ENCODE measurements at regions of chr10 and their contacts with region 1.

Region 1: GRCh38 chr10:22067099-22067498 is 63.6 kb upstream of the DNAJC1 start:
- DNase-seq: no peak
- H3K4me3 ChIP-seq: no peak overlapping the region
- H3K27ac ChIP-seq: no peak overlapping the region
- H3K4me1 ChIP-seq: no peaks in the 10 kb centered on the region
- H3K27me3 ChIP-seq: no peaks in the 10 kb centered on the region
- CTCF ChIP-seq: no peak
- POLR2A ChIP-seq: no peak

Region 2: GRCh38 chr10:21217107-21217506 is 850.0 kb before region 1 on chr10:
- intact Hi-C with region 1: loop called (anchors 5 kb)
- DNase-seq: no peak
- H3K4me3 ChIP-seq: no peak overlapping the region
- H3K27ac ChIP-seq: no peak overlapping the region
- H3K4me1 ChIP-seq: no peaks in the 10 kb centered on the region
- H3K27me3 ChIP-seq: no peaks in the 10 kb centered on the region
- CTCF ChIP-seq: no peak
- POLR2A ChIP-seq: no peak

Region 3: GRCh38 chr10:22103701-22104470 is 36.8 kb after region 1 on chr10:
- intact Hi-C with region 1: no loop called
- DNase-seq: no peak
- H3K4me3 ChIP-seq: no peak overlapping the region
- H3K27ac ChIP-seq: no peak overlapping the region
- H3K4me1 ChIP-seq: no peaks in the 10 kb centered on the region
- H3K27me3 ChIP-seq: no peaks in the 10 kb centered on the region
- CTCF ChIP-seq: peak in 1 of 3 donors; percentile 23
- POLR2A ChIP-seq: no peak

Region 4: GRCh38 chr10:22550732-22551131 is 483.6 kb after region 1 on chr10:
- intact Hi-C with region 1: no loop called
- DNase-seq: no peak
- H3K4me3 ChIP-seq: no peak overlapping the region
- H3K27ac ChIP-seq: no peak overlapping the region
- H3K4me1 ChIP-seq: no peaks in the 10 kb centered on the region
- H3K27me3 ChIP-seq: no peaks in the 10 kb centered on the region
- CTCF ChIP-seq: peak in 1 of 3 donors; percentile 37
- POLR2A ChIP-seq: no peak

Region 5: GRCh38 chr10:22679608-22680007 is 612.5 kb after region 1 on chr10:
- intact Hi-C with region 1: no loop called
- DNase-seq: no peak
- H3K4me3 ChIP-seq: no peak overlapping the region
- H3K27ac ChIP-seq: no peak overlapping the region
- H3K4me1 ChIP-seq: no peaks in the 10 kb centered on the region
- H3K27me3 ChIP-seq: no peaks in the 10 kb centered on the region
- CTCF ChIP-seq: no peak
- POLR2A ChIP-seq: no peak

Measured in breast epithelium (tissue), 4 donors.